ENCODE measurements at regions of chr7 and their contacts with region 1.

Region 1: GRCh38 chr7:32942786-32943653 is 14.2 kb upstream of the FKBP9 start:
- DNase-seq: peak; percentile 86
- H3K4me3 ChIP-seq: peak overlapping the region; percentile 88
- H3K27ac ChIP-seq: peak overlapping the region; percentile 98
- H3K4me1 ChIP-seq: peaks cover 49% of the 10 kb centered on the region
- H3K27me3 ChIP-seq: no peaks in the 10 kb centered on the region
- CTCF ChIP-seq: peak; percentile 83

Region 2: DNA sequence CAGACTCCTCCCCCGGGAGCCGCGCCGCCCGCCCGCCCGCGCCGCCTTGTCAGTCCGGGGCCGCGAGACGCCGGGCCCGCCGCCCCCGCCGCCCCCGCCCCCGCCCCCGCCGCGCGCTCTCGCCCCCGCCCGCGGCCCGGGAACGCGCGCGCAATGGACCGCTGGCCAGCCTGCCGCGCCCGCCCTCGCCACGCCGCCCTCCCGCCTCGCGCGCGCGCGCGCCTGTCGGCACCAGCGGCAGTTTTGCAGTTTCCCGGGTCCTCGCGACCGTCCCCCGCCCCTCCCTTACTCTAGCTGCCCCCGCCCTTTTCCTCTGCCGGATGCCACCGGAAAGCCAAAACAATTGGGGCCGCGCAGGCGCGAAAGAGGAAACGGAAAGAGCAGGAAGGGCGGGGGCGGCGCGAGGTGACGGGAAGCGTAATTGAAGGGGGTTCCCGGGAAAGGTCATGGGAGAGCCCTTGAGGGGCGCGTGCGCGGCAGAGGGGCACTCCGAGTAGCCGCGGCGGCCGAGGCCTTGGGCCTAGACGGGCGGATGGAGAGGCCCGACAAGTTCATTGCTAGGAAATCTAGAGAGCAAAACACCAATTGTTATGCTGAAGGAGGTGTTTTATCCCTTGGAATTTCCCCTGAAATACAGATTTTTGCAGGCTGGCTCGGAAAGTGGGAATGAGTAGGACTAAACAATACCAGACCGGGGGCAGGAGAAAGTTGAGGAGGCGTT is 51.1 kb before region 1 on chr7:
- intact Hi-C with region 1: loop called (anchors 10 kb)
- DNase-seq: peak; percentile 99
- H3K4me3 ChIP-seq: peak overlapping the region; percentile 84
- H3K27ac ChIP-seq: peak overlapping the region; percentile 98
- H3K4me1 ChIP-seq: peaks cover 52% of the 10 kb centered on the region
- H3K27me3 ChIP-seq: no peaks in the 10 kb centered on the region
- CTCF ChIP-seq: no peak

Region 3: GRCh38 chr7:33040803-33041516 is 97.9 kb after region 1 on chr7:
- intact Hi-C with region 1: loop called (anchors 10 kb)
- DNase-seq: no peak
- H3K4me3 ChIP-seq: peak overlapping the region; percentile 63
- H3K27ac ChIP-seq: peak overlapping the region; percentile 78
- H3K4me1 ChIP-seq: peaks cover 77% of the 10 kb centered on the region
- H3K27me3 ChIP-seq: no peaks in the 10 kb centered on the region
- CTCF ChIP-seq: no peak

Measured in left ventricle myocardium inferior (tissue), 1 donor.